Sigmoid colon (tissue), 7 donors: ENCODE measurements at regions of chr20 and their contacts with region 1.

Region 1: GRCh38 chr20:57388953-57389694 is 2.1 kb upstream of the RBM38 start:
- DNase-seq: peak; percentile 92
- H3K4me3 ChIP-seq: peak overlapping the region; percentile 6 to 47 (median 41)
- H3K27ac ChIP-seq: peak overlapping the region; percentile 82 to 86 (median 86)
- H3K4me1 ChIP-seq: peaks cover 0 to 47% (median 35%) of the 10 kb centered on the region in 4 donors
- H3K27me3 ChIP-seq: no peaks in the 10 kb centered on the region
- CTCF ChIP-seq: peak in 1 of 4 experiments; percentile 16
- EP300 ChIP-seq: no peak
- POLR2A ChIP-seq: peak in 1 of 2 donors; percentile 17

Region 2: DNA sequence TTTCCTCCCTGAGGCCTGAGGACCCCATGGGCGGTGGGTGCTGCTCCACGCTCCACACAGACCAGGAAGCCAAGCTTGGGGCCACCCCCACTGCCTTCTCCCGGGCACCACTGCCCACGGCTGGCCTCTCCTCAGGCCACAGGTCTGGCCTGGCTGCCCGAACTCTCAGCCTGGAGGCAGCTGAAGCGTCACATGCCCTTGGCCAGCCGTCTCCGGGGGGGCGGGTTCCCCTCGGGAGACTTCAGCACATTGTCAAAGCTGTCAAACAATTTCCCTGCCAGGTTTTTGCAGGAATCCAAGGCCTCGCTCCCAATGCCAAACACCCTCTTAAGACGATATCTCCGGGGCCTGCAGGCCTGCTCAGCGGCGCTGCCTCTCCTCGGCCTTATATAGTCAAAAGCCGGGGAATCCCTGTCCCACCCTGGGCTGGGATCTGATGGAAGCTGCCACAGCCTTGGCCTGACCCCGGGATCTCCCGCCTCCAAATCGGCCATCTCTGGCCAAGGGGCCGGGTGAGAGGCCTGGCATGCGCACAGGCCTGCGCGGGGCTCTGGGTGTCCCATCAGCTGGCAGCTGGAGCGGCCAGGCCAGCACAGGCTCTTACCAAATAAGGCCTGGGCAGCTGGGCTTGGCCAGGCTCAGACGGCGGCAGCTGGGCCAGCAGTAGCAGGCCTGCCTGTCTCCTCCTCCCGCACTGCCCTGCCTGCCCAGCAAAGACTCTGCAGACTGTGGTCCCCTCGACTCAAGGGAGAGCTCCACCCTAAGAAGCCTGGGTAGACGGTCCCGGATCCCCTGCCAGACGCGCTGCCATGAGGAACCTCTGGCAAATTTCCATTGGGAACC is 51.8 kb after region 1 on chr20:
- intact Hi-C with region 1: loop called (anchors 1 kb)
- DNase-seq: peak; percentile 97
- H3K4me3 ChIP-seq: no peak overlapping the region
- H3K27ac ChIP-seq: peak overlapping the region; percentile 93 to 99 (median 95)
- H3K4me1 ChIP-seq: peaks cover 0 to 96% (median 89%) of the 10 kb centered on the region in 4 donors
- H3K27me3 ChIP-seq: no peaks in the 10 kb centered on the region
- CTCF ChIP-seq: no peak
- EP300 ChIP-seq: peak; percentile 60 to 95 (median 90)
- POLR2A ChIP-seq: peak; percentile 52 to 73

Region 3: DNA sequence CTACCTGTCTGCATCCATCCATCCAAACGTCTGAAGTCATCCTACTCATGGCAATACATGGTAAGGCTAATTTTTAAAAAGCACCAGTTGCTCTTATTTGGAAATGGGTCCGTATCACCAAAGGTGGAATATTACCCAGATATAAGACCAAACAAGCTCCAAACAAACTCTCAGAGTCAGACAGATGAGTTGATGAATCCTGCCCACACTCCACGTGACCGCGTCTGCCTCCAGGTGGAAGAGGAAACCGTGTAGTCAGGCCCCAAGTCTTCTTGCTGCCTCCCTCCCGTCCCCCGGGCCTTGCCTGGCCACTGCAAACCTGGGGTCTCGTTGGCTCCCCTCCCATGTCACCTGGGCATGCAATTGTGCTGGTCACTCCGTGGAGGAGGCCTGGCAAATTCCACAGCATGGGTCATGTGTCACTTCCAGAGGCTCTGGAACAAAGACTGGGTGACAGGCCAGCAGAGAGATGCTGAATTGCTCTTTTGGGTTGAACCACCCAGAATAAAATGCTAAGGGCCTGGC is 104.0 kb after region 1 on chr20:
- intact Hi-C with region 1: loop called (anchors 2 kb)
- DNase-seq: no peak
- H3K4me3 ChIP-seq: no peak overlapping the region
- H3K27ac ChIP-seq: peak overlapping the region; percentile 66 to 76 (median 68)
- H3K4me1 ChIP-seq: peaks cover 0 to 15% (median 12%) of the 10 kb centered on the region in 4 donors
- H3K27me3 ChIP-seq: no peaks in the 10 kb centered on the region
- CTCF ChIP-seq: no peak
- EP300 ChIP-seq: no peak
- POLR2A ChIP-seq: no peak

Region 4: GRCh38 chr20:57582432-57583305 is 193.5 kb after region 1 on chr20:
- intact Hi-C with region 1: loop called (anchors 5 kb)
- DNase-seq: peak; percentile 93
- H3K4me3 ChIP-seq: peak overlapping the region in 3 of 4 donors; percentile 9 to 21 (median 15)
- H3K27ac ChIP-seq: peak overlapping the region; percentile 67 to 79 (median 72)
- H3K4me1 ChIP-seq: peaks cover 0 to 66% (median 50%) of the 10 kb centered on the region in 4 donors
- H3K27me3 ChIP-seq: no peaks in the 10 kb centered on the region
- CTCF ChIP-seq: peak in 2 of 4 experiments; percentile 24 to 38
- EP300 ChIP-seq: peak in 3 of 4 donors; percentile 34 to 75 (median 75)
- POLR2A ChIP-seq: no peak

Region 5: DNA sequence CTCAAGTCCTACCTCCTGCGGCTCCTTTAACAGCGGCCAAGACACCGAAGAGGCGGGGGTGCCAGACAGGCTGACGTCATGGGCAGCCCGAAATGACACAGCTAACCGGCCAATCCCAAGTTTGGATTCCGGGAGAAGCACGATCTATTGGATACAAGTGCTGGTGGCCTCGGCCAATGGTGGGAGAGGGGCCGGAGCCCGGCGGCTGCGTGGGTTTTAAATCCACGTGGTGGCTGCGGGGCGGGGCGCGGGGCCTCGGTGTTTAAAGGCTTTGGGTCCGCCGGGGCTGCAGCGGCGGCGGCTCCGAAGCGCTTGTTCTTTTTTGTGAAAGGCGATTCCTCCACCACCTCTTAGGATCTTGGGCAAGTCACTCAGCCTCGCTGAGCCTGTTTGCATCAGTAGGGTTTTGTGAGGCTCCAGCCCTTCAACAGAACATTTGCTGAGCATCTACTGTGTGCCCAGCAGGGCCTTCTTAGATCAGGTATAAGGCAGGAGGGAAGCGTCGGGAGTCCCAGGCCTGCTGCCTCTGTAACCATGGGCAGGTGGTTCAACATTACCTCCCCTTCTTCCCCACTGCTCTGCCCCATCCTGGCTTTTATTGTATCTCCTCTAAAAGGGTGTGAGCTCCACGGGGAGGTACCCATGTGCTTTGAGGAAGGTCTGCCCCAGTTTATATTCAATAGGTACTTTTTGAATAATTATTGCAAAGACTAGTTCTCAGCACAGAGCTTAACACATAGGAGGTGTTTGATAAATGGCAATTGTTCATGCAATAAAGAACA is 329.6 kb after region 1 on chr20:
- intact Hi-C with region 1: loop called (anchors 10 kb)
- DNase-seq: peak; percentile 99
- H3K4me3 ChIP-seq: peak overlapping the region in 3 of 4 donors; percentile 34 to 40 (median 37)
- H3K27ac ChIP-seq: peak overlapping the region; percentile 25 to 55 (median 34)
- H3K4me1 ChIP-seq: peaks cover 0 to 37% (median 17%) of the 10 kb centered on the region in 4 donors
- H3K27me3 ChIP-seq: no peaks in the 10 kb centered on the region
- CTCF ChIP-seq: no peak
- EP300 ChIP-seq: peak in 1 of 4 donors; percentile 50
- POLR2A ChIP-seq: no peak

Region 6: GRCh38 chr20:58236612-58237330 is 847.6 kb after region 1 on chr20:
- intact Hi-C with region 1: loop called (anchors 10 kb)
- DNase-seq: peak; percentile 77
- H3K4me3 ChIP-seq: peak overlapping the region; percentile 15 to 51 (median 40)
- H3K27ac ChIP-seq: peak overlapping the region in 3 of 4 donors; percentile 10 to 38 (median 11)
- H3K4me1 ChIP-seq: peaks cover 0 to 11% (median 3%) of the 10 kb centered on the region in 4 donors
- H3K27me3 ChIP-seq: no peaks in the 10 kb centered on the region
- CTCF ChIP-seq: peak; percentile 81 to 95 (median 91)
- EP300 ChIP-seq: no peak
- POLR2A ChIP-seq: no peak